ENCODE measurements at regions of chr16 and their contacts with region 1.

Region 1: GRCh38 chr16:74709441-74709877 is 8.8 kb upstream of the MLKL start:
- DNase-seq: peak; percentile 78
- H3K27ac ChIP-seq: no peak overlapping the region
- CTCF ChIP-seq: peak; percentile 97

Region 2: GRCh38 chr16:74729783-74730699 is 20.6 kb after region 1 on chr16:
- CTCF ChIA-PET with region 1: interaction called, 3 read pairs
- POLR2A ChIA-PET with region 1: interaction called, 12 read pairs
- DNase-seq: peak; percentile 46
- H3K27ac ChIP-seq: peak overlapping the region; percentile 95
- CTCF ChIP-seq: no peak

Region 3: DNA sequence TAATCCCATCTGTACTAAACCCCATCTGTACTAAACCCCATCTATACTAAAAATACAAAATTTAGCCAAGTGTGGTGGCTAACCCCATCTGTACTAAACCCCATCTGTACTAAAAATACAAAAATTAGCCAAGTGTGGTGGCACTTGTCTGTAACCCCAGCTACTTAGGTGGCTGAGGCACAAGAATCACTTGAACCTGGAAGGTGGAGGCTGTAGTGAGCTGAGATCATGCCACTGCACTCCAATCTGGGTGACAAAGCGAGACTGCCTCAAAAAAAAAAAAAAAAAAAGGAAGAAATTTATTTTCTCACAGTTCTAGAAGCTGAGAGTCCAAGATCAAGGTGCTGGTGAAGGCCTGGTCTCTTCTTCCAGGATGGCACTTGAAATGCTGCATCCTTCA is 450.9 kb after region 1 on chr16:
- CTCF ChIA-PET with region 1: no interaction called
- POLR2A ChIA-PET with region 1: interaction called, 11 read pairs
- DNase-seq: no peak
- H3K27ac ChIP-seq: no peak overlapping the region
- CTCF ChIP-seq: no peak

Measured in RWPE1 (cell line).